H1 (cell line): ENCODE measurements at regions of chr3 and their contacts with region 1.

Region 1: GRCh38 chr3:36741285-36741684 is 23.1 kb downstream of the DCLK3 start:
- DNase-seq: no peak
- H3K4me3 ChIP-seq: no peak overlapping the region
- H3K27ac ChIP-seq: no peak overlapping the region
- H3K4me1 ChIP-seq: no peaks in the 10 kb centered on the region
- H3K27me3 ChIP-seq: no peaks in the 10 kb centered on the region
- CTCF ChIP-seq: peak; percentile 27 to 65 (median 51)
- EP300 ChIP-seq: no peak
- POLR2A ChIP-seq: no peak
- RAD21 ChIP-seq: peak; percentile 45 to 58

Region 2: GRCh38 chr3:36707623-36708409 is 33.5 kb before region 1 on chr3:
- CTCF ChIA-PET with region 1: no interaction called
- POLR2A ChIA-PET with region 1: no interaction called
- DNase-seq: no peak
- H3K4me3 ChIP-seq: no peak overlapping the region
- H3K27ac ChIP-seq: no peak overlapping the region
- H3K4me1 ChIP-seq: no peaks in the 10 kb centered on the region
- H3K27me3 ChIP-seq: no peaks in the 10 kb centered on the region
- CTCF ChIP-seq: peak in 2 of 3 experiments; percentile 10 to 38; a peak in 2 of 4 replicates
- EP300 ChIP-seq: no peak
- POLR2A ChIP-seq: no peak
- RAD21 ChIP-seq: peak; percentile 40 to 53

Region 3: DNA sequence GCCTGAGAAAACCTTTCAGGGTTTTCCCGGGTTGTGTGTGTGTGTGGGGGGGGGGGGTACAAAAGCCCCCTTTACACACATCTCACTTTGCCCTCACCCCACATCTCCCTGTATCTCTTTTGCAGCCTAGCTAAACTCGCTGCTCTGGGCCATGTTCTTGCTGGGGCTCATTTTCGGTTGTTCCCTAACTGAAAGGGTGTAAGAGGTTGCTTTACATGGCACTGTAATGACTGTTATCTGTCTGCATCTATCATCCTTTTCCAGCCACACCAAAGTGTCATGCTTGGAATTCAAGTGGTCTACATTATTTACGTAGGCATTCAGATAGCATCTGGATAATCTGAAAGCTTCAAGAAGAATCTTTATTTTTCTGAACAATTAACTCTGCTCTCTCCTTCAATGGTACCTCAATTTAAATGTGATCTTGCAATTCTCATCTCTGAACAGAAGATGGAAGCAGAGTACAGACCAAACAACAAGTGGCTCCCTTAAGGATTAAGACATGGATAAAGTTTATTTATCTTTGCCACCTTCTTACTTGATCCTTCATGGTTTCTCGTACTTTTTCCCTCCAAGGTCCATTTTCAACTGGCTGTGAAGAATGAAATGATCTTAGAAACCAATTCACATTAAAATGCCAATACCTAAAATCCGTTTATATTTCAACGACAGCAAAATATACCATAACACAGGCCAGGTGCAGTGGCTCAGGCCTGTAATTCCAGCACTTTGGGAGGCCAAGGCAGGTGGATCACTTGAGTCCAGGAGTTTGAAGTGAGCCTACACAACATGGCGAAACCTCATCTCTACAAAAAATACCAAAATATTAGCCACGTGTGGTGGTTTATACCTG is 11.9 kb before region 1 on chr3:
- CTCF ChIA-PET with region 1: interaction called, 11 read pairs
- POLR2A ChIA-PET with region 1: no interaction called
- DNase-seq: no peak
- H3K4me3 ChIP-seq: no peak overlapping the region
- H3K27ac ChIP-seq: no peak overlapping the region
- H3K4me1 ChIP-seq: no peaks in the 10 kb centered on the region
- H3K27me3 ChIP-seq: no peaks in the 10 kb centered on the region
- CTCF ChIP-seq: peak in 2 of 3 experiments; percentile 50 to 65; a peak in 2 of 4 replicates
- EP300 ChIP-seq: no peak
- POLR2A ChIP-seq: no peak
- RAD21 ChIP-seq: peak; percentile 87 to 92

Region 4: DNA sequence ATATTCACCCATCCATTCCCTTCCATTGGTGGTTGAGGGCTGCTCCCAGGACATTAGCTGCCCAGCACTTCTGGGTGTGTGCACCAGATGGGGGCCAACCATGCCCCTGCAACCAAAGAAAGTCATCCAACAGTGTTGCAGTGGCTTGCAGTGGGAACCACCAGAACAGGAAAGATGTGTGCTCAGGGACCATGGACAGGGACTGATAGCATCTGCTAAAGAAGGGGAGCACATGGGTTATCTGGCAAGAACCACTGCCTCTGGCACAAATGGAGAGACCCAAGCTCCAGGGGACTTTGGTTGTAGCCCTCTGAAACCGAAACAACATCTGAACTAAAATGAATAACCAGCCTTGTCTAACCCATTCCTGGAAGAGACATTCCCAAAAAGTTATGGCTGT is 15.0 kb after region 1 on chr3:
- CTCF ChIA-PET with region 1: interaction called, 38 read pairs
- POLR2A ChIA-PET with region 1: no interaction called
- DNase-seq: no peak
- H3K4me3 ChIP-seq: no peak overlapping the region
- H3K27ac ChIP-seq: no peak overlapping the region
- H3K4me1 ChIP-seq: no peaks in the 10 kb centered on the region
- H3K27me3 ChIP-seq: no peaks in the 10 kb centered on the region
- CTCF ChIP-seq: no peak
- EP300 ChIP-seq: no peak
- POLR2A ChIP-seq: no peak
- RAD21 ChIP-seq: no peak

Region 5: DNA sequence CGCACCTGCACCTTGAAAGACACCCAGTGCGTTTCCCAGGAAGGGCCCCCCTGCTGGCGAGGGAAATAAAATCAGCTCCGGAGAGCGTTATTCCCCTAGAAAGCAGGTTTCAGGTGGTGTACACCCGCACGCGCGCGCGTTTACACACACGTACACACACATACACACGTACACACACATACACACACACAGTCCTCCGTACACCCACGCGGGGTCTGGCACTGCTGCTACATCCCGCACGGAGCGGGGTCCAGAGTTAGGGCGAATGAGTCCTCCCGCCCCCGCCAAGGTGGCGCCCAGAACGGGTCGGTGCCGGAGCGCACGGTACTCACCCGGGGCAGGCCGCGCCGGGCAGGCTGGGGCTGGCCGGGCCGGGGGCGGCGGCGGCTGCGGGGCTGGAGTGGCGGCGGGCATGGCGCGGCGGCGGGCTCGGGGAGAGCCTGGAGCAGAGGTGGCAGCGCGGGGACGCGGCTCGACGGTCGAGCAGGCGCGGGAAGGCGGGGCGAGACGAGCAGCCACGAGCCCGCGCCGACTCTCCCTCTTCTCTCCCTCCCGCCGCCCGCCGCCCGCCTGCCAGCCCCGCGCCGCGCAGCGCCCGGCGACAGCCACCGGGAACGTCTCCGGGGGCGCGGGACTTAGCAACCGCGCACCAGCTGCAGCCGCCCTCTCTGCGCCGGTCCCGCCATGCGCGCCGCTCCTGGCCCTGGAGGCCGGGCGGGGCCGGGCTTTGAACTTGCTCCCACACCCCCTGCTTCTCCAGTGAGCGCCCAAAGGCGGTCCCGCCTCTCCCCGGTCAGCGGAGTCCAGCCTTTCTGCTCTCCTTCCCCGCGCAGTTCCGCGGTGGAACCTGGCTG is 22.8 kb after region 1 on chr3 and contains the start of gene DCLK3:
- CTCF ChIA-PET with region 1: interaction called, 24 read pairs
- POLR2A ChIA-PET with region 1: no interaction called
- DNase-seq: peak in 1 of 2 experiments; percentile 67
- H3K4me3 ChIP-seq: peak within 1 kb of the TSS; percentile 54 to 78 (median 62)
- H3K27ac ChIP-seq: no peak within 1 kb of the TSS
- H3K4me1 ChIP-seq: peaks cover 0 to 7% (median 3%) of the 10 kb centered on the region in 4 experiments; a peak in 3 of 7 replicates
- H3K27me3 ChIP-seq: peaks cover 6 to 23% (median 21%) of the 10 kb centered on the region in 4 experiments
- CTCF ChIP-seq: peak in 2 of 3 experiments; percentile 5 to 18; a peak in 2 of 4 replicates
- EP300 ChIP-seq: no peak
- POLR2A ChIP-seq: no peak
- RAD21 ChIP-seq: no peak
- total RNA-seq, gene DCLK3: 0.63 and 0.69 TPM in 2 replicates

Region 6: DNA sequence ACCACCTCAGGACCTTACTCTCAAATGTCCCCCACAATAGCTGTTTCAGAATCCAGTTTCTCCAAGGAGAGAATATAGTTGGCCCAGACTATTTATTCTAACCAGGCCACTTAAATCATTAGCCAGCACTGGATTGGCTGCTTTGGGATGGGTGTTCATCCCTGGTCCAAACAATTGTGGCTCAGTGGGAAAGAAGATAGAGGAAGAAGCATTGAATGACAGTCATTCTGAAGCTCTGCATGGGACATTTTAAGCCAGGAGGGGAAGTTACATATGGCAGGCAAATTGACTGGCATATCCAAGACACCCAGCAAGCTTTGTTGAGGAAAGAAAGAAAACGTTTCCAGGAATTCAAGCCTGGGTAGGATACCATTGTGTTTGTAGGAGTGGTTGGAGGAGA is 28.6 kb after region 1 on chr3:
- CTCF ChIA-PET with region 1: interaction called, 10 read pairs
- POLR2A ChIA-PET with region 1: no interaction called
- DNase-seq: no peak
- H3K4me3 ChIP-seq: no peak overlapping the region
- H3K27ac ChIP-seq: no peak overlapping the region
- H3K4me1 ChIP-seq: peaks cover 2 to 5% (median 3%) of the 10 kb centered on the region in 4 experiments; a peak in 3 of 7 replicates
- H3K27me3 ChIP-seq: peaks cover 2 to 7% (median 6%) of the 10 kb centered on the region in 4 experiments
- CTCF ChIP-seq: no peak
- EP300 ChIP-seq: no peak
- POLR2A ChIP-seq: no peak
- RAD21 ChIP-seq: no peak